Activated CD4-positive, alpha-beta T cell treated with anti-CD3 and anti-CD28 coated beads for 36 hours (primary cell): ENCODE measurements at regions of chr17 and their contacts with region 1.

Region 1: GRCh38 chr17:16623282-16623681 is 30.4 kb downstream of the ZNF624 start:
- DNase-seq: no peak
- ATAC-seq: no peak
- H3K4me3 Mint-ChIP-seq: no peak overlapping the region
- H3K27ac Mint-ChIP-seq: no peak overlapping the region
- H3K4me1 Mint-ChIP-seq: no peaks in the 10 kb centered on the region
- H3K27me3 Mint-ChIP-seq: no peaks in the 10 kb centered on the region

Region 2: GRCh38 chr17:16551878-16552636 is 71.2 kb before region 1 on chr17:
- CTCF ChIA-PET with region 1: interaction called, 3 read pairs
- POLR2A ChIA-PET with region 1: no interaction called
- intact Hi-C with region 1: loop called in 1 of 2 experiments (anchors 5 kb)
- DNase-seq: no peak
- ATAC-seq: no peak
- H3K4me3 Mint-ChIP-seq: no peak overlapping the region
- H3K27ac Mint-ChIP-seq: no peak overlapping the region
- H3K4me1 Mint-ChIP-seq: no peaks in the 10 kb centered on the region
- H3K27me3 Mint-ChIP-seq: no peaks in the 10 kb centered on the region